Activated B cell treated with CpG ODN at 0.5 μM for 24 hours (primary cell): ENCODE measurements at regions of chr12 and their contacts with region 1.

Region 1: GRCh38 chr12:94186278-94187241 is 38.2 kb downstream of the PLXNC1 start:
- DNase-seq: no peak
- ATAC-seq: no peak
- H3K4me3 Mint-ChIP-seq: no peak overlapping the region
- H3K27ac Mint-ChIP-seq: no peak overlapping the region
- H3K4me1 Mint-ChIP-seq: peaks cover 14% of the 10 kb centered on the region
- H3K27me3 Mint-ChIP-seq: no peaks in the 10 kb centered on the region
- CTCF ChIP-seq: no peak

Region 2: DNA sequence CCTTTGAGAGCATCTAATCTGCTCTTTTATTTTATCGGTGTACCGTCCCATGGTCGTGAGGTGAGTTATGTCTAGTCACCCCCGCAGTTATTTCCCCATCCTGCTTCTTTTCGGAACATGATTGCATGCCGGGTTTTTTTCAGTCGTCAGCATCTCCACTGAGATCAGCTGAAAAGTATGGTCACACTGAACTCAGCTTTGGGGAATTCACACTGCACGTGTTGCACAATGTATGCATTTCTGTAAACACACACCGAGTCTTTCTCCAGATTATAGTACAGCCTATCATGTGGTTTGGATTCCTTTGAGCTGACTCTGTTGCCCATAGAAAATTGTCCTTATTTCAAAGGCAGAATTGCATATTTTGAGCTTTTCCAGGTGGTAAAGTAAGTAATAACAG is 13.6 kb before region 1 on chr12:
- CTCF ChIA-PET with region 1: no interaction called
- POLR2A ChIA-PET with region 1: no interaction called
- intact Hi-C with region 1: loop called (anchors 2 kb)
- DNase-seq: no peak
- ATAC-seq: no peak
- H3K4me3 Mint-ChIP-seq: no peak overlapping the region
- H3K27ac Mint-ChIP-seq: peak overlapping the region; percentile 30
- H3K4me1 Mint-ChIP-seq: peaks cover 43% of the 10 kb centered on the region
- H3K27me3 Mint-ChIP-seq: no peaks in the 10 kb centered on the region
- CTCF ChIP-seq: no peak

Region 3: DNA sequence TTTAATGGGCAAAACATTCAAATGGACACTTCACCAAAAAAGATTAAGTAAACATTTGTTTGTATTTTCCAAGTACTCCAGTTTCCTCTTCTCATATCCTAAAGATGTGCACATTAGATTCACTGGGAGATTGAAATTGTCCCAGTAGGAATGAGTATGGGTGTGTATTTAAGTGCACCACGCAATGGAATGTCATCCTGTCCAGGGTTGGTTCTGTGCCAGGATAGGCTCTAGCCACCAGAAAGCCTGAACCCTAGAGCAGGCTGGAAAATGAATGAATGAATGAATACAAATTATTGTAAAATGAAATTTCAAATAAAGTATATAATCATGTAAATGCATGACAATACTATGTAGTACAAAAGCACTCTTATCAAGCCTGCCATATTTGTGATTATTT is 259.1 kb after region 1 on chr12:
- CTCF ChIA-PET with region 1: no interaction called
- POLR2A ChIA-PET with region 1: no interaction called
- intact Hi-C with region 1: no loop called
- DNase-seq: no peak
- ATAC-seq: no peak
- H3K4me3 Mint-ChIP-seq: no peak overlapping the region
- H3K27ac Mint-ChIP-seq: no peak overlapping the region
- H3K4me1 Mint-ChIP-seq: no peaks in the 10 kb centered on the region
- H3K27me3 Mint-ChIP-seq: no peaks in the 10 kb centered on the region
- CTCF ChIP-seq: no peak